ENCODE measurements at regions of chr1 and their contacts with region 1.

Region 1: DNA sequence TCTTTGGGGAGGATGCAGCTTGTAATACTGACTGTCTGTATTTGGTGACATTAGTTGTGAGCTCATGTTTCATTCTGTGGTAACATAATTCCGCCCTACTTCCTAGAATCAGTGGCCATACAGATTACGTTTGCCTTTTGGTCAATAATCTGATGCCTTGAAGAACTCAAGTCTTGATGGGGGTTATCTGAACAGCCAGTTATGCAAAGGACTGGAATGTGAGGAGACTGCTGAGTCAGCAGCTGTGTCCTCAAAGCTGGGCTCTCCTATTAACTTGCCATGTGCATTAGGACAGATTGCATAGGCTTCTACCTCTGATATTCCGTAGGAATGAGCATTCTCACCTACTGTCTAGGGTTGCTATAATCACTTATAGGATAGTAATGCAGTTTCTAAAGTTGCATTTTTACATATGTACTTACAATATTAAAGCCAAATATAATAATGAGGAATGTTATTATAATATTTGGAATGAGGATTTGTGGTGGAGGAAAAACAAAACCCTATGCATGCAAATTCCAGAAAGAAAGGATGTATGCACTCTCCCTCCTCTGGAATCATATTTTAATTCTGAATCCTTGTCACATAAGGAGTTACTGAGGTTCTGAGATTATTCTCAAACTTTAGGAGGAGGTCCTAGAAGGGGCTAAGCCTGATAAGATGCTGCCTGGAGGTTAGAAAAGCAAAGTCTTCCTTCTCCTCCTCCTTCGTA is 116.0 kb downstream of the NOS1AP start:
- DNase-seq: no peak
- ATAC-seq: no peak
- H3K4me3 ChIP-seq: no peak overlapping the region
- H3K27ac ChIP-seq: peak overlapping the region; percentile 69
- H3K4me1 ChIP-seq: peaks cover 57% of the 10 kb centered on the region
- H3K27me3 ChIP-seq: no peaks in the 10 kb centered on the region
- CTCF ChIP-seq: no peak

Region 2: DNA sequence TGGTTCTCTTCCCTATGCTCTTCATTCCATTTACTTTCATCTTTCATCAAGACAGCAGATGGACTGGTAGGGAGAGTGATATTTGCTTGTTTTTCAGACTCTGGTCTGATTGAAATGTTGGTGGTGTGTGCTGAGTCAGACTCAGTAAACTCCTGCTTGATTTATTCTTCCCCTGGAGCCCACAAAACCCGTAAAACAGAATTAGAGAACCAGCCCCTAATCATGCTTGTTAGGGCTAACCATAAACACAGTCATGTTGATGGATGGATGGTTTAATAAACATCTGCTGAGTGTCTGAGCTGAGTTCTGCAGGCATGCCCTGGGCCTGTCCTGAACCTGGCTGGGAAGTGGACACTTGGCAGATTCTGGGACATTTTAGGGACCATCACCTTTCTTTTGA is 91.2 kb before region 1 on chr1:
- CTCF ChIA-PET with region 1: no interaction called
- POLR2A ChIA-PET with region 1: interaction called, 11 read pairs
- in situ Hi-C with region 1: no loop called
- intact Hi-C with region 1: no loop called
- DNase-seq: no peak
- ATAC-seq: peak; percentile 37; the same call in 1 of the 2 replicates
- H3K4me3 ChIP-seq: no peak overlapping the region
- H3K27ac ChIP-seq: peak overlapping the region; percentile 63
- H3K4me1 ChIP-seq: peaks cover 55% of the 10 kb centered on the region
- H3K27me3 ChIP-seq: no peaks in the 10 kb centered on the region
- CTCF ChIP-seq: no peak

Measured in Panc1 (cell line).